ENCODE measurements at regions of chr6 and their contacts with region 1.

Region 1: DNA sequence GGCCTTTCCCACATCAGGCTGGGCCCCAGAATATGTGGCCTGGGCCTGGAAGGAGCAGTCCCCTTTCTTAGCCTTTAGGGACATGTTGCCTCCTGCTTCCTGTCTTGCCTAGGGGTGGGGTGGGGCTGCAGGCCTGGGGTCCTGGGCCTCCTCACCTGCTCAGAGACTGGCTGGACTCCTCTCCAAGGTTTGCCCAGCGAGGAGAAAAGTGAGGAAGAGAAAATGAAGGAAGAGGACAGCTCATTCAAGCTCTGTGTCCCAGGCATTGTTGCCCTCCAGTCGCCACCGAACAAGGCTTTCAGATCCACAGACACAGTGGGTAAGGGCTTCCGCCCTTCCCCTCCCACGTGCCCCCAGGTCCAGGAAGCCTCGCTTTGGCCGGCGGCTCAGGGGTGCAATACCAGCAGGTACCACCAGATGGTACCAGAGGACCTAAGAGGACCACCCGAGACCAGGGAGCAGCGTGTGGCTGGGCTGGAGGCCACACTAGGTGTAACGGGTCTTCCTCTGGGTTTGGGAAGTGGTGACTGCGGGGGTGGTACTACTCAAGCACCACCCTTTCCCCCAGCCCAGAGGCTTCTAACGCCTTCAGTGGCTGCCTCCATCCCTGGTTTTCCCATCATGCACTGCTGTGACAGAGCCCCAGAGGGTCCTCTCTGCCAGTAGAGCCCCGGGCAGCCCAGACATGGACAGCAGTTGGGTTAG is 5.5 kb upstream of the BAK1 start:
- DNase-seq: peak; percentile 76 to 97
- H3K4me3 ChIP-seq: no peak overlapping the region
- CTCF ChIP-seq: peak in 1 of 3 donors; percentile 94
- POLR2A ChIP-seq: no peak

Region 2: GRCh38 chr6:33607784-33608161 is 22.2 kb after region 1 on chr6:
- intact Hi-C with region 1: no loop called
- DNase-seq: no peak
- H3K4me3 ChIP-seq: no peak overlapping the region
- CTCF ChIP-seq: no peak
- POLR2A ChIP-seq: no peak

Region 3: GRCh38 chr6:33700391-33701050 is 115.0 kb after region 1 on chr6:
- intact Hi-C with region 1: loop called (anchors 5 kb)
- DNase-seq: no peak
- H3K4me3 ChIP-seq: no peak overlapping the region
- CTCF ChIP-seq: peak in 1 of 3 donors; percentile 12
- POLR2A ChIP-seq: no peak

Measured in lower leg skin (tissue), 4 donors.